CD4-positive, alpha-beta memory T cell (primary cell): ENCODE measurements at regions of chr3 and their contacts with region 1.

Region 1: DNA sequence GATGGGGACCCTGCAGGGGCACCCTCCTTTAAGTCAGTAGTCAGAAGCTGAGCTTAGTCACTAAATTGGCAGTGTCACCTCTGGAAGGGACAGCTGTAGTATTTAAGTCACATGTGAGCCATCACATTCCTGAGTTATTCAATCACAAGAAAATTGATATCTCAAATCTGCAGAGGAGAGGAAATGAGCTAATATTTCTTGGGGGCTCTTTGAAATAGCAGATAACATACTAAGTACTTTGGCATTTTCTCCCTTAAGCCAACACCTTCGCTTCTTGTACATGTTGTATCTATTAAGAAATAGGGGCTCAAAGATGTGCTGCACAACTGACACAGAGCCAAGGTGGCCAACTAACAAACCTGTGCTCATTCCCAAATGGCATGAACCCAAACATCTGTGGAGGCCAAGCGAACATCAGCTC is 63.1 kb downstream of the ABHD5 start:
- DNase-seq: no peak
- H3K4me3 ChIP-seq: no peak overlapping the region
- H3K4me3 Mint-ChIP-seq: no peak overlapping the region
- H3K27ac ChIP-seq: no peak overlapping the region
- H3K27ac Mint-ChIP-seq: no peak overlapping the region
- H3K4me1 ChIP-seq: peaks cover 34% of the 10 kb centered on the region
- H3K4me1 Mint-ChIP-seq: peaks cover 25 to 45% (median 37%) of the 10 kb centered on the region in 4 donors
- H3K27me3 ChIP-seq: no peaks in the 10 kb centered on the region
- H3K27me3 Mint-ChIP-seq: no peaks in the 10 kb centered on the region

Region 2: GRCh38 chr3:43246976-43247375 is 506.8 kb before region 1 on chr3:
- CTCF ChIA-PET with region 1: no interaction called
- POLR2A ChIA-PET with region 1: no interaction called
- intact Hi-C with region 1: no loop called
- DNase-seq: peak in 3 of 5 donors; percentile 19 to 30 (median 25)
- H3K4me3 ChIP-seq: no peak overlapping the region
- H3K4me3 Mint-ChIP-seq: peak overlapping the region in 6 of 8 donors; percentile 0 to 28 (median 20)
- H3K27ac ChIP-seq: no peak overlapping the region
- H3K27ac Mint-ChIP-seq: peak overlapping the region in 6 of 7 donors; percentile 1 to 76 (median 43)
- H3K4me1 ChIP-seq: peaks cover 48% of the 10 kb centered on the region
- H3K4me1 Mint-ChIP-seq: peaks cover 30 to 51% (median 41%) of the 10 kb centered on the region in 4 donors
- H3K27me3 ChIP-seq: no peaks in the 10 kb centered on the region
- H3K27me3 Mint-ChIP-seq: no peaks in the 10 kb centered on the region

Region 3: GRCh38 chr3:43732747-43733425 is 20.9 kb before region 1 on chr3:
- CTCF ChIA-PET with region 1: no interaction called
- POLR2A ChIA-PET with region 1: no interaction called
- intact Hi-C with region 1: no loop called
- DNase-seq: no peak
- H3K4me3 ChIP-seq: no peak overlapping the region
- H3K4me3 Mint-ChIP-seq: no peak overlapping the region
- H3K27ac ChIP-seq: no peak overlapping the region
- H3K27ac Mint-ChIP-seq: no peak overlapping the region
- H3K4me1 ChIP-seq: no peaks in the 10 kb centered on the region
- H3K4me1 Mint-ChIP-seq: no peaks in the 10 kb centered on the region
- H3K27me3 ChIP-seq: no peaks in the 10 kb centered on the region
- H3K27me3 Mint-ChIP-seq: no peaks in the 10 kb centered on the region

Region 4: GRCh38 chr3:43769471-43770425 is 16.0 kb after region 1 on chr3:
- CTCF ChIA-PET with region 1: interaction called, 24 read pairs
- POLR2A ChIA-PET with region 1: interaction called, 8 read pairs
- intact Hi-C with region 1: no loop called
- DNase-seq: peak; percentile 65 to 77 (median 66)
- H3K4me3 ChIP-seq: no peak overlapping the region
- H3K4me3 Mint-ChIP-seq: peak overlapping the region in 7 of 8 donors; percentile 33 to 67 (median 48)
- H3K27ac ChIP-seq: peak overlapping the region; percentile 8
- H3K27ac Mint-ChIP-seq: peak overlapping the region; percentile 14 to 90 (median 81)
- H3K4me1 ChIP-seq: peaks cover 40% of the 10 kb centered on the region
- H3K4me1 Mint-ChIP-seq: peaks cover 19 to 56% (median 38%) of the 10 kb centered on the region in 4 donors
- H3K27me3 ChIP-seq: no peaks in the 10 kb centered on the region
- H3K27me3 Mint-ChIP-seq: peaks cover 2% of the 10 kb centered on the region in 2 donors